AG04450 (cell line): ENCODE measurements at regions of chr2 and their contacts with region 1.

Region 1: DNA sequence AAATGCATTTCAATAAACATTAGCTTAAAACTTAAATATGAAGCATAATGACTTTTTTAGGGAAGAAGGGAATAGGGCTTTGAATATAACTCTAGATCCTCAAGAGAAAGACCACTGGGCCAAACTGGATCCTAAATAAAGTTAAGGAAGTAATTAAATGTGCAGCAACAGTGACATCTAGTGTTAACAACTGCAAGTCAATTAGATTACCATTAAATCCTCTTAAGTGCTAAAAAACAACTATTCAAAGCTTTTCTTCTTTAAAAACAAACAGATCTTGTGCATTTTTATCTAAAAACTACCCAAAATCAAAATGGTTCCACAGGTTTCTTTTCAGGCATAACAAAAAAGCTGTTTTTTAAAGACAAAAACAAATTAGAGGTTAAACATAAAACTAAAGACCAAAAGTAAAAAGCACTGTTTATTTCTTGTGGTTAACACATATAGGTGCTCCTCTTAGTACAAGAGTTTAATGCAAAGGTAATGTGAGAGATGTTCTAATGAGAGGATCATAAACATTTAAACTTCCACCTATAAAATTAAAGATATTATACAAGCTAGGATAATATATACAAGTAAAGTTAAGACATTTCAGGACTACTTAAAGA is 111.4 kb downstream of the THADA start:
- DNase-seq: peak; percentile 61
- H3K4me3 ChIP-seq: no peak overlapping the region
- H3K27ac ChIP-seq: no peak overlapping the region
- H3K27me3 ChIP-seq: no peaks in the 10 kb centered on the region
- CTCF ChIP-seq: peak; percentile 51

Region 2: DNA sequence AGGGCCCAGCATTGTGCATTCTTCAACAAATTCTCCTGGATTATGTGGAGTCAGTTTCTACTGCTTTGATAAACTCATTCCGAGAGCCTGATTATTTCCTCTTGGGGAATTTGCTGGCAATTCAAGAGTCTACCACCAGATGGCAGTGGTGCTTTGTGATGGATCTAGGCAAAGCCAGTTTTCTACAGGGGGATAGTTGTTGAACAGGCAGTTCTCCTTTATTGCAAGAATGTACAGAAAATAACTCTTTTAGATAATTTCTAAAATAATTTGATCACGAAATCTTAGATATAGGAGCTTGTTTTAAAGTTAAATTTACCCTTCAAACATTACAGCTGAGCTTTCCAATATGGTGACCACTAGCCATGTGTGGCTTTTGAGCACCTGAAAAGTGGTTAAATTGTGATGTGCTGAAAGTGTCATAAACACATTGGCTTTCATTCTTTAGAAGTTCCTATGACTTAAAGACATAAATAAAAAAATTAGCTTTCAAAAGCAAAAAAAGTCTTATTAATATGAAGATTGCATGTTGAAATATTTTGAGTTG is 625.3 kb before region 1 on chr2:
- CTCF ChIA-PET with region 1: interaction called, 27 read pairs
- POLR2A ChIA-PET with region 1: no interaction called
- DNase-seq: peak; percentile 68
- H3K4me3 ChIP-seq: no peak overlapping the region
- H3K27ac ChIP-seq: no peak overlapping the region
- H3K27me3 ChIP-seq: peaks cover under 1% of the 10 kb centered on the region
- CTCF ChIP-seq: peak; percentile 95

Region 3: DNA sequence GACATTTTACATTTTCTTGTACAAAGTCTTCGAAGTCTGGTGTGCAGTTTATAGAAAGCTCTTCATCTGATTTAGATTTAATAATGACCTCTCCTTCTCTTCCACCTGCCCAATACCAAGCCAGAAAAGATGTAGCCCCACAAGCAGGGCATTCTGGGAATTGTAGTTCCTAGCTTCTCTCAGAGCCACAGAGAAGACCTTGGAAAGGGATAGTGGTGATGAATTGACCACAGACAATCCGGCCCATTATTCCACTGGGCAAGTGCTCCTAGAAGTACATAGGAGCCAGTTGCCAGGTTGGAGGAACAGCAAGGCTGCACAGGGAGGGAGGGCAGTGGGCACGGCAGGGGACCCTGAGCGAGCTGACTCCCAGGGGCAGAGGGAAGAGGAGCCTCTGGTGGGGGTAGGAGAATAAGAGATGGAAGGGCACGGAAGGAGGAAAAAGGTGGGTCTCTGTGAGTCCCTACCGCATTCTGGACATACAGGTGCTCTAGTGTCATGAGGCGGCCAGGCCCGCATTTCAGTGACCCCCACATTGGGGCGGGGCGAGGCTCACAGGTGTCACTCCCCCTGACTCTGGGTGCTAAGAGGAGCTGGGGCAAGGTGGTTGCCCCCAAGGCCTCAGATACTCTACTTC is 539.5 kb before region 1 on chr2:
- CTCF ChIA-PET with region 1: interaction called, 76 read pairs
- POLR2A ChIA-PET with region 1: no interaction called
- DNase-seq: no peak
- H3K4me3 ChIP-seq: no peak overlapping the region
- H3K27ac ChIP-seq: no peak overlapping the region
- H3K27me3 ChIP-seq: no peaks in the 10 kb centered on the region
- CTCF ChIP-seq: no peak

Region 4: DNA sequence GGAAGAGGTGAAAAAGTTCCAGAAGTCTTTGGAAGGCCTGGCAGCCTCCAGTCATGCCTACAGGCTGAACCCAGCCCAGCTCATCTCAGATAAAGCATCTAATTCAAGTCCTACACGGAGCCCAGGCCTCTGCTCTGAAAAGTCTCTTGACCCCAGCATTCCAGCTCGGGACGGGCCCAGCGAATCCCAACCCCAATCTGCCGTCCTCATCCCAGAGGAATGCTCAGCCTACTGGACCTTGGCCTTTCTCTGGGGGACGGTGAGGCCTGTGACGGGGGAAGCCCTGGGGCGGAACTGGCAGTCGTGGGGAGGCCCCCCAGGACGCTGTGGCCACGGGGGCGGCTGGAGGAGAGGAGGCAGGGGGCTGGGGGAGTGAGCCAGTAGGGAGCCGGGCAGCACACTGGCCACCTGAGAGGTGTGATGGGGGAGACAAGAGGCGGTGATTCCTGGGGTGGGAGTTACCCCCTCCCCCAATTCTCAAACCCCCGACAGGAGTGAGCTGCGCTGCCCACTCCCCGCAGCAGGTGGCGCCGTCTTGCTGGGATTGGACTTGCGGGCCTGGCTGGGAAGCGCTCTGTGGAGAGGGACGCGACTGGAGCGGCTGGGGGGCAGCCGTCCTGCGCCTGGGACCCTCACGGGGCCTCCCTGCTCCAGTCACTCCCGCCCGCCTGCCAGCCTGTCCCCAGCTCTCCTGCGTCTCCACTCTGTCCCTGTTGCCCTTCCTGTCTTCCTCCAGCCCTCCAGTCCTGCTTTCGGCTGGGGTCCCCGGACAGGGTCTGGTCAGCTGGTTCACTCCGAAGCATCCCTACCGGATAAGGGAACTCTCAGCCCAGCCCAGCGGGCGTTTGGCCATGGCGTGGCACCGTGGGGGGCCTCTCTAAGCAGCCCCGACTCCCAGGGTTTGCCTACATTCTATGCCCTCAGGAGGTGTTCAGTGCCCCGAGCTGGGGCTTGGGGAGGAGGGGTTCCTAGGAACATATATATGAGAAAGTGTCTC is 509.4 kb before region 1 on chr2:
- CTCF ChIA-PET with region 1: interaction called, 26 read pairs
- POLR2A ChIA-PET with region 1: no interaction called
- DNase-seq: no peak
- H3K4me3 ChIP-seq: peak overlapping the region; percentile 47
- H3K27ac ChIP-seq: peak overlapping the region; percentile 47
- H3K27me3 ChIP-seq: no peaks in the 10 kb centered on the region
- CTCF ChIP-seq: peak; percentile 95

Region 5: DNA sequence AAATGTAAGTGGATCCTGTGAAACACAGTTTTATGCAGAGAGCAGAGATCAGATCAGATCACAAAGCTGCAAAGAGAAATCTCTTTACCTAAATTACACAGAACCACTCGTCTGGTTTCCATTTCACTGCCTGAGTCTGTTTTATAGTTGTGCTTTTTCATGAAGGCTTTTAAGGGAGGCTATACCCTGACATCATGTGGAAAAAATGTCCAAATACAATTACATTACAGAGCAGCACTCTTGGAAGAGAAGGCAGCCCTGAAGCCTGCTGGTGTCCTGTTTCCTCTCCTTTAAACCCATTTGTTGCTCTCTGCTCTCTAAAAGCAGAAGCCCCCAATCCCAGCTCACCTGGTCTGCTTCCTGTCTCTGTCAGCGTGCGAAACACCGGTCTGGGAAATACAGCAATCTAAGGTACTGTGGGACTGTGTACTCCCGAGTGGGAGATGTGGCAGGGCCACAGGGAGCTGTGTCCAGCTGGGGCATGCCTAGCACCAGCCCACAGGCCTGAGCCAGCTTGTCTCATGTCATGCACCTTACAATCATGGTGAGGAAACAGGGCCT is 233.2 kb before region 1 on chr2:
- CTCF ChIA-PET with region 1: interaction called, 16 read pairs
- POLR2A ChIA-PET with region 1: no interaction called
- DNase-seq: peak; percentile 62
- H3K4me3 ChIP-seq: no peak overlapping the region
- H3K27ac ChIP-seq: peak overlapping the region; percentile 88
- H3K27me3 ChIP-seq: no peaks in the 10 kb centered on the region
- CTCF ChIP-seq: no peak

Region 6: DNA sequence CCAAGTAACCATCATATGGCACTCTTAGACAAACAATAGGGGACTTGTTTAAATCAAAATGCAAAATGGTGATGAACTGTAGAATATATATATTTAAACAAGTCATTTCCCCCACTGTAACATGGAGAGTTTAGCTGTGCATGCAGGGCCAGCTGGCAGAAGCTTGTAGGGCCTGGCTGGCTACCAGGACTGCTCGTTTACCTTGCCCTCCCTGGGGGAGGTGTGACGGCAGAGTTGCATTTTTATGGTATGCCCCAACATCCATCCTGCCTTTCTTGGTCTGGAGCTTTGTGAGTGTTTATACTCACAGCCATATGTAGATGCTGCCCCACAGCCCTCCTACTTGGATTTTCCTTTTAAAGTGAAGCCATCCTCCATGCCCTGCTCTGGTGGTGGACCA is 156.3 kb before region 1 on chr2:
- CTCF ChIA-PET with region 1: interaction called, 10 read pairs
- POLR2A ChIA-PET with region 1: no interaction called
- DNase-seq: no peak
- H3K4me3 ChIP-seq: no peak overlapping the region
- H3K27ac ChIP-seq: no peak overlapping the region
- H3K27me3 ChIP-seq: no peaks in the 10 kb centered on the region
- CTCF ChIP-seq: no peak

Region 7: GRCh38 chr2:43542285-43542937 is 58.0 kb after region 1 on chr2:
- CTCF ChIA-PET with region 1: interaction called, 27 read pairs
- POLR2A ChIA-PET with region 1: no interaction called
- DNase-seq: no peak
- H3K4me3 ChIP-seq: no peak overlapping the region
- H3K27ac ChIP-seq: no peak overlapping the region
- H3K27me3 ChIP-seq: no peaks in the 10 kb centered on the region
- CTCF ChIP-seq: peak; percentile 50